ENCODE measurements at regions of chr13 and their contacts with region 1.

Region 1: GRCh38 chr13:97359181-97360057 is 74.5 kb upstream of the RAP2A start:
- DNase-seq: peak; percentile 11
- H3K4me3 Mint-ChIP-seq: no peak overlapping the region
- H3K27ac Mint-ChIP-seq: no peak overlapping the region
- H3K4me1 Mint-ChIP-seq: no peaks in the 10 kb centered on the region
- H3K27me3 Mint-ChIP-seq: no peaks in the 10 kb centered on the region

Region 2: GRCh38 chr13:97109841-97110492 is 249.5 kb before region 1 on chr13:
- intact Hi-C with region 1: loop called (anchors 1 kb)
- DNase-seq: peak; percentile 67
- H3K4me3 Mint-ChIP-seq: no peak overlapping the region
- H3K27ac Mint-ChIP-seq: no peak overlapping the region
- H3K4me1 Mint-ChIP-seq: peaks cover 8% of the 10 kb centered on the region
- H3K27me3 Mint-ChIP-seq: peaks cover 17% of the 10 kb centered on the region

Region 3: GRCh38 chr13:97194479-97194878 is 164.9 kb before region 1 on chr13:
- intact Hi-C with region 1: no loop called
- DNase-seq: no peak
- H3K4me3 Mint-ChIP-seq: no peak overlapping the region
- H3K27ac Mint-ChIP-seq: no peak overlapping the region
- H3K4me1 Mint-ChIP-seq: no peaks in the 10 kb centered on the region
- H3K27me3 Mint-ChIP-seq: peaks cover 5% of the 10 kb centered on the region

Region 4: GRCh38 chr13:97242755-97243497 is 116.5 kb before region 1 on chr13:
- intact Hi-C with region 1: no loop called
- DNase-seq: no peak
- H3K4me3 Mint-ChIP-seq: no peak overlapping the region
- H3K27ac Mint-ChIP-seq: no peak overlapping the region
- H3K4me1 Mint-ChIP-seq: peaks cover 20% of the 10 kb centered on the region
- H3K27me3 Mint-ChIP-seq: no peaks in the 10 kb centered on the region

Region 5: DNA sequence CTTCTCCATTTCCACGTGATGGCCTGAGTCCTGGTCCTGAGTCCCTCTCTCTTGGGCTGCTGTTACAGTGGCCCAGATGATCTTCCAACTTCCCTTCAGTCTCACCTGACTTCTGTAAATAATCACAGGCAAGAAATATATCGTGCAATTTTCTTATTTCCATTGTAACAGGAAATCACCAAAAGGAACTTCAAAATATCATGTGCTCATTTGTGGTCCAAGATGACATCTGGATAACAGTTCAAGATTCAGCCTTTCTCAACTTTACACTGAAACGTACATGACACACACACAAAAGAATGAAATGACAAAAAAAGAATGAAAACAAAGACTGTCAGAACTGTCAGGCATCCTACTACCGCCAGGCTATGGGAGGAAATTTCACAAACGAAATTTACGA is 52.6 kb after region 1 on chr13:
- intact Hi-C with region 1: no loop called
- DNase-seq: no peak
- H3K4me3 Mint-ChIP-seq: no peak overlapping the region
- H3K27ac Mint-ChIP-seq: no peak overlapping the region
- H3K4me1 Mint-ChIP-seq: no peaks in the 10 kb centered on the region
- H3K27me3 Mint-ChIP-seq: peaks cover 5% of the 10 kb centered on the region

Measured in activated T-helper 1 cell treated with anti-CD3 and anti-CD28 coated beads, Interleukin-12 subunit alpha, Interleukin-12 subunit beta, Interleukin-2, Interleukin-4 antibody, amounts not matched to agents 30 ng/mL and 10 ng/mL and 1 ng/mL, durations not matched to agents 14 hours and 24 hours and 36 hours (primary cell).